ENCODE measurements at regions of chr2 and their contacts with region 1.

Region 1: GRCh38 chr2:66574701-66575624 is 140.0 kb downstream of the MEIS1 start:
- DNase-seq: peak; percentile 46 to 68 (median 61)
- ATAC-seq: peak; percentile 51 to 81 (median 71)
- H3K4me3 ChIP-seq: peak overlapping the region; percentile 27 to 66 (median 52)
- H3K27ac ChIP-seq: peak overlapping the region in 5 of 12 donors; percentile 27 to 97 (median 53)
- H3K4me1 ChIP-seq: peaks cover 0 to 35% (median 25%) of the 10 kb centered on the region in 12 donors
- H3K27me3 ChIP-seq: peaks cover 36 to 63% (median 46%) of the 10 kb centered on the region in 9 donors
- CTCF ChIP-seq: peak in 11 of 12 donors; percentile 28 to 63 (median 46)
- POLR2A ChIP-seq: no peak

Region 2: DNA sequence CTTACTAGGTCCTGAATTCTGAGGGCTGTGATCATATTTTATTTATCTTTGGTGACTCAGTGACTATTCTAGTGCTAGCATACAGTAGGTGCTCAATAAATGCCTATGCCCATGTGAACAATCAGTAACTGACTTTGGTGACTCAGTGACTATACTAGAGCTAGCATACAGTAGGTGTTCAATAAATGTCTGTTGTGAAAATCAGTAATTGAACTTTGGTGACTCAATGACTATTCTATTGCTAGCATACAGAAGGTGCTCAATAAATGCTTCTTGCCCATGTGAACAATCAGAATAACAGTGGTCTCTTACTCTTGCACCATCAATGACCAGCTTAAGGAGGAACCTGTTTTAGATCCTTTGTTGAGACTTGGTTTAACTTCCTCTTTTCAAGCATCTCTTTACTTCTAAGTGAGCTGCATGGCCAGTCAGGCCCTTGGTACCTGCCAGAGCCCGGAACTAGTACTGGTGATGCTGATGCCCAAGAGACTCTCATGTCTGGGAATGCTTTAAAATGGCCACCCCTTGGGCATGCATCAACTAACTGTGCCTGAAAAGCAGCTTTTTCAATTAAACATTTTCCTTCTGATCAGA is 927.6 kb before region 1 on chr2:
- intact Hi-C with region 1: loop called in 1 of 10 experiments (anchors 10 kb)
- DNase-seq: no peak
- ATAC-seq: no peak
- H3K4me3 ChIP-seq: no peak overlapping the region
- H3K27ac ChIP-seq: no peak overlapping the region
- H3K4me1 ChIP-seq: no peaks in the 10 kb centered on the region
- H3K27me3 ChIP-seq: no peaks in the 10 kb centered on the region
- CTCF ChIP-seq: no peak
- POLR2A ChIP-seq: no peak

Region 3: GRCh38 chr2:65722028-65722778 is 852.8 kb before region 1 on chr2:
- intact Hi-C with region 1: loop called in 4 of 10 experiments (anchors 5 to 10 kb)
- DNase-seq: peak; percentile 33 to 63 (median 47)
- ATAC-seq: peak; percentile 86 to 92 (median 89)
- H3K4me3 ChIP-seq: no peak overlapping the region
- H3K27ac ChIP-seq: no peak overlapping the region
- H3K4me1 ChIP-seq: no peaks in the 10 kb centered on the region
- H3K27me3 ChIP-seq: peaks cover 0 to 5% (median 0%) of the 10 kb centered on the region in 9 donors
- CTCF ChIP-seq: peak in 11 of 12 donors; percentile 7 to 60 (median 41)
- POLR2A ChIP-seq: no peak

Region 4: DNA sequence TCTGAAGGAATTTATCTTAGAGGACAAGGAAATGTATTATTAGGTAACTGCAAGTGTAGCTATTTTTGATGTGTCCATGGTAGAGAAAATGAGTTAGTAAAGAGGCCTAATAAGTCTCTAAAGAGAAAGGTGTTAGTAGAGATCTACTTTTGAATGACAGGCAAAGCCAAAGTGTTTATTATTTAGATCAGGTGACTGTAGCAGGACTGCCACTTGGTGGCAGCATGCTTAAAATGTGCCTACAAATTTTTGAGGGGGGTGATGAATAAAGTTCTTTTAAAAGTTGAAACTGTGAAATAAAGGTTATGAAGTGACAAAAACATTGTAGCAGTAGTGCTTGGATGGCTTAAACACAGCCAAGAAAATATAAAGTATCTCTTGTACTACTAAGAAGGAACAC is 561.5 kb before region 1 on chr2:
- intact Hi-C with region 1: loop called in 2 of 10 experiments (anchors 10 kb)
- DNase-seq: no peak
- ATAC-seq: no peak
- H3K4me3 ChIP-seq: no peak overlapping the region
- H3K27ac ChIP-seq: no peak overlapping the region
- H3K4me1 ChIP-seq: no peaks in the 10 kb centered on the region
- H3K27me3 ChIP-seq: no peaks in the 10 kb centered on the region
- CTCF ChIP-seq: peak in 6 of 12 donors; percentile 10 to 31 (median 26)
- POLR2A ChIP-seq: no peak

Region 5: DNA sequence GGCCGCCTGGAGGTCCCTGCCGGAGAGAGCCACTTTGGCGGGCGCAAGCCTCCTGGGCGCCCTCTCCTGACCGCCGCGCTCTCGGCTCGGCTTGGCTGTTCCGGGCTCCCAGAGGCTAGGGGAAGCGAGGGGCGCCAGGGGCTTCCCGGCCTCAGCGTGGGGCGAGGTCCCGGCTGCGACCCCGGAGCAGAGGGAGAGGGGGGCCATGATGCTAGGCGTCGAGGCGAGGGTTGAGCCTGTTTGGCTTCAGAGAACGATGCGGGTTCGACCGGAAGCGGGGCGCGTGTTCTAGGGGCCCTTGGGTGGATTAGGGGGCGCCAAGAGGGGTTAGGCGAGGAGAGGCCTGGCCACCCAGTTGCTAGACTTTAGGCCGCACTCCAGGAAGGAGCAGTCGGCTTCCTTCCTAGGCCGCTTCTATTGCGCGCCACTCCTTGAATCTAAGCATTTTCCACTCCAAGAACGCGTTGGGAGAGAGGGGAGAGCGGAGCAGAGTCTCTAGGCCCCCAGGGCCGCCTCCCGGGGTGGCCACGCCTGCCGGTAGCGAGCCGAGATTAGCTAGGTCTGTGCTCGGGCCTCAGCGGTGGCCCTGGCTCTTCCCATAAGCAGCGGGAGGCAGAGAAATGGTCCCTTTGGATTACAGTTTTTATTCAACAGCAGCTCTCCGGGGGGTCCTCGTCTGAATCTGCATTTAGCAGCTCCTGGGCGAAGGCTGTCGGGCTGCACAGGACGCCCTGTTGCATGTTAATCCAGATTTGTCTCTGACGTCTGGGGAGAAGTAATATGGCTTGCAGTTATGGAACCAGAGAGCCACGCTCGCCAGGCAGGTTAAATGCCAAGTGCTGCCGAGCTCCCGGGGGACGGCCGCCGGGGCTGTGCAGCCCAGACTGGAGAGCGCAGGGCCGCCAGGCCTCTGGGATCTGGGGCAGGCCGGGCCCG is 128.8 kb before region 1 on chr2:
- intact Hi-C with region 1: loop called in 1 of 10 experiments (anchors 5 kb)
- DNase-seq: peak; percentile 39 to 81 (median 74)
- ATAC-seq: peak; percentile 59 to 77 (median 75)
- H3K4me3 ChIP-seq: peak overlapping the region in 11 of 12 donors; percentile 22 to 50 (median 37)
- H3K27ac ChIP-seq: peak overlapping the region; percentile 67 to 95 (median 84)
- H3K4me1 ChIP-seq: peaks cover 0 to 34% (median 4%) of the 10 kb centered on the region in 12 donors
- H3K27me3 ChIP-seq: peaks cover 0 to 45% (median 0%) of the 10 kb centered on the region in 9 donors
- CTCF ChIP-seq: peak in 5 of 12 donors; percentile 15 to 39 (median 34)
- POLR2A ChIP-seq: no peak

Region 6: GRCh38 chr2:66532972-66533868 is 41.7 kb before region 1 on chr2:
- intact Hi-C with region 1: no loop called
- DNase-seq: no peak
- ATAC-seq: peak in 2 of 4 donors; percentile 45 to 63
- H3K4me3 ChIP-seq: no peak overlapping the region
- H3K27ac ChIP-seq: peak overlapping the region in 2 of 12 donors; percentile 21 to 38
- H3K4me1 ChIP-seq: peaks cover 0 to 41% (median 14%) of the 10 kb centered on the region in 12 donors
- H3K27me3 ChIP-seq: no peaks in the 10 kb centered on the region
- CTCF ChIP-seq: no peak
- POLR2A ChIP-seq: no peak

Region 7: DNA sequence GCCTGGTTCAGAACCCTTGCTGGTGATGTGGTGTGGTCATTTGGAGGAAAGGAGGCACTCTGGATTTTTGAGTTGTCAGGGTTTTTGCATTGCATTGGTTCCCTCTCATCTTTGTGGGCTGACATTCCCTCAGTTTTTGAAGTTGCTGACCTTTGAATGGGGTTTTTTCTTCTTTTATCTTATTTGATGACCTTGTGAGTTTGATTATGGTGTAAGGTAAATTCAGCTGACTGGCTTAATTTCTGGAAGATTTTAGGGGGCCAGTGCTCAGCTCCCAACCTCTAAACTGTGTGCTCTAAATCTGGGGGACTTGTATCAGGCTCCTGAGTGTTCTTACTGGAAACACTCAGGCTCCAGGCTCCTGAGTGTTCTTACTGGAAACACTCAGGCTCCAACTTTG is 85.8 kb after region 1 on chr2:
- intact Hi-C with region 1: no loop called
- DNase-seq: no peak
- ATAC-seq: no peak
- H3K4me3 ChIP-seq: no peak overlapping the region
- H3K27ac ChIP-seq: no peak overlapping the region
- H3K4me1 ChIP-seq: no peaks in the 10 kb centered on the region
- H3K27me3 ChIP-seq: peaks cover 0 to 4% (median 0%) of the 10 kb centered on the region in 9 donors
- CTCF ChIP-seq: no peak
- POLR2A ChIP-seq: no peak

Region 8: GRCh38 chr2:67840460-67841068 is 1265.6 kb after region 1 on chr2:
- intact Hi-C with region 1: loop called in 9 of 10 experiments (anchors 5 to 10 kb)
- DNase-seq: peak; percentile 61 to 82 (median 70)
- ATAC-seq: peak; percentile 94 to 99 (median 98)
- H3K4me3 ChIP-seq: no peak overlapping the region
- H3K27ac ChIP-seq: no peak overlapping the region
- H3K4me1 ChIP-seq: no peaks in the 10 kb centered on the region
- H3K27me3 ChIP-seq: peaks cover 0 to 4% (median 0%) of the 10 kb centered on the region in 9 donors
- CTCF ChIP-seq: peak; percentile 56 to 84 (median 74)
- POLR2A ChIP-seq: no peak

Region 9: GRCh38 chr2:67846370-67847070 is 1271.6 kb after region 1 on chr2:
- intact Hi-C with region 1: loop called in 9 of 10 experiments (anchors 5 to 10 kb)
- DNase-seq: peak; percentile 62 to 81 (median 71)
- ATAC-seq: peak; percentile 52 to 94 (median 84)
- H3K4me3 ChIP-seq: peak overlapping the region in 5 of 12 donors; percentile 11 to 38 (median 23)
- H3K27ac ChIP-seq: peak overlapping the region in 2 of 12 donors; percentile 27 to 52
- H3K4me1 ChIP-seq: peaks cover 0 to 16% (median 0%) of the 10 kb centered on the region in 12 donors
- H3K27me3 ChIP-seq: no peaks in the 10 kb centered on the region
- CTCF ChIP-seq: peak; percentile 66 to 85 (median 77)
- POLR2A ChIP-seq: no peak